ENCODE measurements at regions of chr14 and their contacts with region 1.

Region 1: DNA sequence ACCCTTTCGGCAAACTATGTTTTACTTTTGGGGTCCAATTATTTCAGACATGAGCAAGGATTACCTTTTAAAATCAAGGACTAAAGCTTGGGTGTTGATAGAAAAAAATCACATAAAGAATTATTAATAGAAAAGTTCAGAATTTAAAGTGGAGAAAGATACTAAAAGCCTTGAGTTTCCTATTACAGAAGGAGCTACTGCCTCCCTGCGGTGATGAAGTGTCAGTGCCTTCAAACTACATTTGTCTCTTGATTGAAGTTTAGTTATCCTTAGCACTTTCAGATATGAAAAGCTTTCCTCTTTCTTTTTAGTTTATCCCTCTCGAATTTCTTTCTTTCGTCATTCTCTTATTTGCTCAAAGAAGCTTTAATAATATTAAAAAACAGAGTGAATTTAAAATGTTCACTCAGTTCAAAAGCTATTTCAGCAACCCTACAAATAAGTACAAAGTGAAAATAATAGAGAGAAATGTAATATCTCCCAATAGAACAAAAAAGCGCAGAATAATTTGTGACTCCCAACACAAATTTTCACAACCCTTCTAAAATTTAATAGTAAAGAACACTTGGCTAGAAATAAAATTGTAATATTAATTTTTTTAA is 87.6 kb downstream of the SEC23A start:
- DNase-seq: peak; percentile 66
- H3K4me3 Mint-ChIP-seq: no peak overlapping the region
- H3K27ac Mint-ChIP-seq: no peak overlapping the region
- H3K4me1 Mint-ChIP-seq: peaks cover 12% of the 10 kb centered on the region
- H3K27me3 Mint-ChIP-seq: no peaks in the 10 kb centered on the region
- CTCF ChIP-seq: peak; percentile 66

Region 2: DNA sequence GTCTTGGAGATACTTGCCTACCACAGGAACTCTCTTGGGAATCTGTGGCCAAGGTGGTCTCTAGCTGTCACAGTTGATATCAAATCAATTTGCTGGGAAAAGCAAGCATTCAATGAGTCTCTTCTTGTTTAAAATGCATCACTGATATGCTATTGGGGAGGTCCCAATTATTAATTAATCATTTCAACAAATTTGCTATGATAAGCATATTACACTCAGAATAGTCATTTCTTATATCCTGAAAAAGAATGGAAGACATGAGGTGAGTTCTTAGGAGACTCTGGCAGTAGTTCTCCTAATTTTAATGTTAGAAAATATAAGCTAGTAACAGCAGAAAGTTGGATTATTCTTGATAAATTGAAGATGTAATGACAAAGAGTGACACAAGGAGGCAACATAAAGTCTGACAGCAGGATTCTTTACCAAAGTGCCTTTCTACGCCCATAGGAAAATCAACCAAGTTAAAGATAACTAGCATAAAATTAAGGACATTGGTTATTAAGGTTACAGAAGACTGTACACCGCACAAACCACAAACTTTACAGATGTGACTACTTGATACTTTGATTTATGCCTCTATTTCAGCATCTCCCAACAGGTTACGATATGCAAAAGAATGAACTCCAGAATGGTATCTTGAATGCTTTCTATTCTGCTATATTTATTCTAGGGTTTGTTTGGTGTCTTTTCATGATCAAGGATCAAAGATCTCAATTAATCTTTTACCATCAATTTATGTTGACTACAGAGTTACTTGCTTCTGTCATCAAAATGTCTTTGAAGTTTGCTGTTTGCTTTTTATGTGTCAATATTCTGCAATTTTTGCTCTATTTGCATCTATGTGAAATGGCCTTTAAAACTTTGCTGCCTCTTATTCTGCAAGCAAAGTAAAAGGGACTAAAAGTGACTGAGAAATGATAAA is 410.0 kb before region 1 on chr14:
- CTCF ChIA-PET with region 1: interaction called, 3 read pairs
- POLR2A ChIA-PET with region 1: no interaction called
- intact Hi-C with region 1: loop called (anchors 10 kb)
- DNase-seq: no peak
- H3K4me3 Mint-ChIP-seq: no peak overlapping the region
- H3K27ac Mint-ChIP-seq: no peak overlapping the region
- H3K4me1 Mint-ChIP-seq: peaks cover 5% of the 10 kb centered on the region
- H3K27me3 Mint-ChIP-seq: no peaks in the 10 kb centered on the region
- CTCF ChIP-seq: peak; percentile 20

Region 3: DNA sequence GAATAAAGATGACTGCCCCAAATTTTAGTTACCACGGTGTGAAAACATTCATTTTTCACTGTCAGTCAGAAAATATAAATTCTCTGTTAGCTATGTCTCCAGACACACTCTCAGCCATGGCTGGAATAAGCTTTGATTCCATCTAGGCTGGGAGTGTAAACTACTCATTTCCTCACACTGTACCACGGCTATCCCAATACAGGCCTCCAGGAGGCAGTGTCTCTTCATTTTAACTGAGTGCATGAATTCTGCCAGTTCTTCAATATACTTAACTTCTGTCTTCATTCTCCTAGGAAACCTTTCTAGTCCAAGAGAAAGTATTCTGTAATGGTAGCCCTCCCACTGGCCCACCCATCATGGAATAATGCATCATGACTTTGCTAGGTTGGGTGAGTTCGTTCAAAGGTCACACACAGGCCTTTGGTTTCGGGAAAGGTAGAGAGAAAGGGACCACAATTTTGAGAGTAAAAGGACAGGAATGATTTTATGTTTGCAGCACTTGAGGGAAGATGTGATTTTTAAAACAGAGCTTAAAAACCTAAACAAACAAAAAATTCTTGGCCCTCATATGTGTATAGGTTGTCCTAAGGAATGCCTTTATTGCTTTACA is 293.5 kb before region 1 on chr14:
- CTCF ChIA-PET with region 1: interaction called, 14 read pairs
- POLR2A ChIA-PET with region 1: no interaction called
- intact Hi-C with region 1: loop called (anchors 1 kb)
- DNase-seq: peak; percentile 72
- H3K4me3 Mint-ChIP-seq: no peak overlapping the region
- H3K27ac Mint-ChIP-seq: no peak overlapping the region
- H3K4me1 Mint-ChIP-seq: peaks cover 8% of the 10 kb centered on the region
- H3K27me3 Mint-ChIP-seq: no peaks in the 10 kb centered on the region
- CTCF ChIP-seq: peak; percentile 63

Region 4: DNA sequence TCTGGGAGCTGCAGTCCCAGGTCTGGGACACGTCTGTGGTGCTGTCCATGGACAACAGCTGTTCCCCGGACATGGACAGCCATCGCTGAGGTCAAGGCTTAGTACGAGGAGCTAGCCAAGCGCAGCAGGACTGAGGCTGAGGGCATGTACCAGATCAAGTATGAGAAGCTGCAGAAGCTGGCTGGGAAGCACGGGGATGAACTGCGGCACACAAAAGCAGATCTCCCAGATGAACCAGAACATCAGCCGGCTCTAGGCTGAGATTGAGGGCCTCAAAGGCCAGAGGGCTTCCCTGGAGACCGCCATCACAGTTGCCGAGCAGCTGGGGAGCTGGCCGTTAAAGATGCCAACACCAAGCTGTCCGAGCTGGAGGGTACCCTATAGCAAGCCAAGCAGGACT is 287.7 kb before region 1 on chr14:
- CTCF ChIA-PET with region 1: interaction called, 14 read pairs
- POLR2A ChIA-PET with region 1: no interaction called
- intact Hi-C with region 1: loop called (anchors 1 kb)
- DNase-seq: no peak
- H3K4me3 Mint-ChIP-seq: no peak overlapping the region
- H3K27ac Mint-ChIP-seq: no peak overlapping the region
- H3K4me1 Mint-ChIP-seq: no peaks in the 10 kb centered on the region
- H3K27me3 Mint-ChIP-seq: no peaks in the 10 kb centered on the region
- CTCF ChIP-seq: no peak

Region 5: GRCh38 chr14:39005044-39005880 is 10.2 kb before region 1 on chr14:
- CTCF ChIA-PET with region 1: interaction called, 14 read pairs
- POLR2A ChIA-PET with region 1: no interaction called
- intact Hi-C with region 1: no loop called
- DNase-seq: no peak
- H3K4me3 Mint-ChIP-seq: no peak overlapping the region
- H3K27ac Mint-ChIP-seq: no peak overlapping the region
- H3K4me1 Mint-ChIP-seq: no peaks in the 10 kb centered on the region
- H3K27me3 Mint-ChIP-seq: no peaks in the 10 kb centered on the region
- CTCF ChIP-seq: no peak

Region 6: GRCh38 chr14:39025810-39026627 is 10.6 kb after region 1 on chr14:
- CTCF ChIA-PET with region 1: interaction called, 14 read pairs
- POLR2A ChIA-PET with region 1: no interaction called
- intact Hi-C with region 1: no loop called
- DNase-seq: no peak
- H3K4me3 Mint-ChIP-seq: no peak overlapping the region
- H3K27ac Mint-ChIP-seq: peak overlapping the region; percentile 9
- H3K4me1 Mint-ChIP-seq: peaks cover 6% of the 10 kb centered on the region
- H3K27me3 Mint-ChIP-seq: no peaks in the 10 kb centered on the region
- CTCF ChIP-seq: no peak